HepG2 (cell line): ENCODE measurements at regions of chr2 and their contacts with region 1.

Region 1: DNA sequence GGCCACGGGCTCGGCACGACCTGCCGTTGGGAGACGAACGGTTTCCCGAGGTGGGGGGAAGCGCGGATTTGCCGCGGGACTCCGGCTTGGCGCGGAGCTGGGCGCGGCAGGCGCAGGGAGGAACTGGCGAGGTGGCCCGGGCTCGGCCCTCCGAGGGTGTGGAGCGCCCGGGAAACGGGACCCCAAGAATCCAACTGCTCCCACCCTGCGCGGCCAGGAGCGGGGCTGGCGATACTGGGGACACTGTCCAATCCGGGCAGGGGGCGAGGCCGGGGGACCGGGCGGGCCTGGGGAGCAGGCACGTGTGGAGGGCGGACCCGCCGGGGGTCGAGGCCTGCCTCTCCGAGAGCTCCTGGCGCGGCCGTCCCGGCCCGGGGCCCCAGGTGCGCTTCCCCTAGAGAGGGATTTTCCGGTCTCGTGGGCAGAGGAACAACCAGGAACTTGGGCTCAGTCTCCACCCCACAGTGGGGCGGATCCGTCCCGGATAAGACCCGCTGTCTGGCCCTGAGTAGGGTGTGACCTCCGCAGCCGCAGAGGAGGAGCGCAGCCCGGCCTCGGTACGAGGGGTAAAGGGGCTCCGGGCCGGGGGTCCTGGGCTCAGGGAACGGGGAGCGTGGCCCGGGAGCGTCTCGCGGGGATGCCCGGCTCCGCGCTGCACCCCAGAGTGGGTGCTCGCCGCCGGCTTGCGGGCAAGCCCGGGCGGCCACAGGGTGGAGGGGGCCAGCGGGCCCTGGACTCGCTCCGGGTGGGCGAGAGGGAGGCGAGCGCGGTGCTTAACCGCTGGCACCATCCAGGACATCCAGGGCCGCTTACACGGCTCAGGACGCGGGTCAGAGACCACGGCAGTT is at the start of gene ANXA4:
- DNase-seq: peak; percentile 90
- ATAC-seq: peak; percentile 90
- H3K4me3 ChIP-seq: peak within 1 kb of the TSS; percentile 77 to 83 (median 79)
- H3K27ac ChIP-seq: peak within 1 kb of the TSS; percentile 94
- H3K4me1 ChIP-seq: peaks cover 56% of the 10 kb centered on the region
- H3K27me3 ChIP-seq: no peaks in the 10 kb centered on the region; a peak in 1 of 5 replicates
- CTCF ChIP-seq: no peak; the same call in 1 of the 2 replicates
- EP300 ChIP-seq: peak in 1 of 2 experiments; percentile 23; a peak in 1 of 4 replicates
- POLR2A ChIP-seq: peak; percentile 85 to 92
- RAD21 ChIP-seq: peak; percentile 11; the same call in 1 of the 2 replicates
- total RNA-seq, gene ANXA4: 155 and 237 TPM in 2 replicates

Region 2: DNA sequence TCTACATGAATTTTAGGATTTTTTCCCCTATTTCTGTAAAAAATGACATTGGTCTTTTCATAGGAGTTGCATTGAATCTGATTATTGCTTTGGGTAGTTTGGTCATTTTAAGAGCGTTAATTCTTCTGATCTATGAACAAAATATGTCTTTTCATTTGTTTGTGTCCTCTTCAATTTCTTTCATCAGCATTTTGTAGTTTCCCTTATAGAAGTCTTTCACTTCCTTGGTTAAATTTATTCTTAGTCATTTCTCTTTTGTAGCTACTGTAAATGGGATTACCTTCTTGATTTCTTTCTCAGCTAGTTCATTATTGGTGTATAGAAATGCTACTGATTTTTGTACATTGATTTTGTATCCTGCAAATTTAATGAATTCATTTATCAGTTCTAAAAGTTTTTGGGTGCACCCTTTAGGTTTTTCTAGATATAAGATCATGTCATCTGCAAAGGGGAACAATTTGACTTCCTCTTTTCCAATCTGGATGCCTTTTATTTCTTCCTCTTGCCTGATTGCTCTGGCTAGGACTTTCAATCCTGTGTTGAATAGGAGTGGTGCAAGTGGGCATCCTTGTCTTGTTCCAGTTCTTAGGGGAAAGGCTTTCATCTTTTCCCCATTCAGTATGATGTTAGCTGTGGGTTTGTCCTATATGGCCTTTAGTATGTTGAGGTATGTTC is 61.7 kb before region 1 on chr2:
- CTCF ChIA-PET with region 1: no interaction called
- POLR2A ChIA-PET with region 1: no interaction called
- in situ Hi-C with region 1: no loop called
- intact Hi-C with region 1: no loop called
- DNase-seq: no peak
- ATAC-seq: no peak
- H3K4me3 ChIP-seq: no peak overlapping the region
- H3K27ac ChIP-seq: no peak overlapping the region
- H3K4me1 ChIP-seq: peaks cover 32% of the 10 kb centered on the region
- H3K27me3 ChIP-seq: peaks cover 0 to 7% of the 10 kb centered on the region in 2 experiments; a peak in 3 of 5 replicates
- CTCF ChIP-seq: no peak
- EP300 ChIP-seq: no peak
- POLR2A ChIP-seq: no peak
- RAD21 ChIP-seq: no peak

Region 3: GRCh38 chr2:69724540-69725159 is 17.2 kb before region 1 on chr2:
- CTCF ChIA-PET with region 1: no interaction called
- POLR2A ChIA-PET with region 1: interaction called, 53 read pairs
- in situ Hi-C with region 1: no loop called
- intact Hi-C with region 1: no loop called
- DNase-seq: peak; percentile 77
- ATAC-seq: peak; percentile 91
- H3K4me3 ChIP-seq: peak overlapping the region; percentile 42 to 65 (median 58)
- H3K27ac ChIP-seq: no peak overlapping the region
- H3K4me1 ChIP-seq: peaks cover 30% of the 10 kb centered on the region
- H3K27me3 ChIP-seq: no peaks in the 10 kb centered on the region
- CTCF ChIP-seq: peak; percentile 99
- EP300 ChIP-seq: no peak
- POLR2A ChIP-seq: no peak
- RAD21 ChIP-seq: peak; percentile 97

Region 4: GRCh38 chr2:69770193-69771146 is 28.6 kb after region 1 on chr2:
- CTCF ChIA-PET with region 1: no interaction called
- POLR2A ChIA-PET with region 1: interaction called, 15 read pairs
- in situ Hi-C with region 1: no loop called
- intact Hi-C with region 1: no loop called
- DNase-seq: peak; percentile 68
- ATAC-seq: peak; percentile 27; the same call in 1 of the 3 replicates
- H3K4me3 ChIP-seq: no peak overlapping the region
- H3K27ac ChIP-seq: no peak overlapping the region
- H3K4me1 ChIP-seq: peaks cover 59% of the 10 kb centered on the region
- H3K27me3 ChIP-seq: no peaks in the 10 kb centered on the region
- CTCF ChIP-seq: no peak
- EP300 ChIP-seq: peak in 1 of 2 experiments; percentile 30; a peak in 1 of 4 replicates
- POLR2A ChIP-seq: no peak
- RAD21 ChIP-seq: no peak

Region 5: DNA sequence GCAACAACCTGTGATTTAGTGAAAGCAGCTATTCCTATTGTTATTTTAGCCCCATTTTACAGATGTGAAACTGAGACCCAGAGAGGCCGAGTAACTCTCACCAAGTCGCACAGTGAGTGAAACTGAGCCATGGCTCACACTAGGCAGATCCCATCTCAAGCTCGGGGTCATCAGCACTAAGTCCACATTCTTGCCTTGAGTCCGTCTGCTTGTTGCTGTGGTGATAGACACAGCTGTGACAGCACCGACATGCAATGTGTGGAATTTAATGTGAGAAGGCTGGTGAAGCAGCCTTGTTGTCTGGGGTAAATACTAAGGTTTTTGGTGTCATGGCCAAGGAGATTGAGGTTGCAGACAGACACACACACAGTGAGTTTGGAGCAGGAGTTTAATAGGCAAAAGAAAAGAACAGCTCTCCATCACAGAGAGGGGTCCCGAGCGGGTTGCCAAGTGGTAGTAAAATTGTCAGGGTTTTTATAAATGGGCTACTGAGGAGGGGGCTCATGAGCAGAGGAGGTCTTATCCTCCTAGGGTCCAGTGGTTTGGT is 47.4 kb after region 1 on chr2:
- CTCF ChIA-PET with region 1: no interaction called
- POLR2A ChIA-PET with region 1: interaction called, 8 read pairs
- in situ Hi-C with region 1: no loop called
- intact Hi-C with region 1: loop called (anchors 2 kb)
- DNase-seq: peak; percentile 82
- ATAC-seq: peak; percentile 81
- H3K4me3 ChIP-seq: no peak overlapping the region
- H3K27ac ChIP-seq: no peak overlapping the region
- H3K4me1 ChIP-seq: peaks cover 35% of the 10 kb centered on the region
- H3K27me3 ChIP-seq: no peaks in the 10 kb centered on the region
- CTCF ChIP-seq: no peak
- EP300 ChIP-seq: no peak
- POLR2A ChIP-seq: no peak
- RAD21 ChIP-seq: no peak

Region 6: DNA sequence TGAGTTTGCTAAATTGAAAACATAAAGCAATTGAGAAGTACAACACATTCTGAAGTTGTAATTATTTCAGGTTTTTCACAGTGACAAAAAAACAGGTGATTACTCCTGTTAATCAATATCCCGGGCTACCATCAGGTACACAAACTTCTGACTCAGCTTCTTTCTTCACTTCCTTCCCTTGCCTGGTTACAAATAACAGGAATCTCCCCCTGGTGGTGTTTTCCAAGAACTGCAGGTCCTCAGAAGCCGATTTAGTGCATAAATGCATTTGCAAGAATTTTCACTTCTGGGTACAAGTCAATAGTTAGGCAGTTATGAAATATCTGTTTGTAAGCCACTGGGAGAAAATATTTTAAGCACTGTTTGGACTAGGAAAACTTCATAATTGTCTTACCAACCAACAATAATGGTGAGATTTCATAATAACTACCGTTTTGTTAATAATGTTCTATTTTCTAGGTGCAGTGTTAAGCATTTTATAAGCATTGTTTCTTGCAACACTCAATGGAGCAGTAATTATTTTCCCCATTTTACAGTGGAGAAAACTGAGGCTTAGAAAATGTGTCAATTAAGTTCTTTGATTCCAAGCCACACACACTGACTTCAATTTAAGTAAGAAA is 75.2 kb after region 1 on chr2:
- CTCF ChIA-PET with region 1: no interaction called
- POLR2A ChIA-PET with region 1: interaction called, 31 read pairs
- in situ Hi-C with region 1: no loop called
- intact Hi-C with region 1: loop called (anchors 1 kb)
- DNase-seq: peak; percentile 94
- ATAC-seq: peak; percentile 77
- H3K4me3 ChIP-seq: no peak overlapping the region
- H3K27ac ChIP-seq: peak overlapping the region; percentile 0
- H3K4me1 ChIP-seq: peaks cover 14% of the 10 kb centered on the region
- H3K27me3 ChIP-seq: no peaks in the 10 kb centered on the region
- CTCF ChIP-seq: peak; percentile 88
- EP300 ChIP-seq: 0 out of 4 replicates have a peak, but pooled peaks of 1 of the 2 experiments have one; percentile 30
- POLR2A ChIP-seq: no peak
- RAD21 ChIP-seq: peak; percentile 88